Activated T-helper 2 cell treated with anti-CD3 and anti-CD28 coated beads, Interferon-gamma antibody, Interleukin-2, Interleukin-4, amounts not matched to agents 10 μg/mL and 5 μg/mL and 100 μg/mL, durations not matched to agents 14 hours and 24 hours and 36 hours (primary cell): ENCODE measurements at regions of chrX and their contacts with region 1.

Region 1: GRCh38 chrX:47623540-47624027 is 3.9 kb upstream of the SYN1 start:
- DNase-seq: peak; percentile 17
- H3K4me3 Mint-ChIP-seq: peak overlapping the region; percentile 71
- H3K27ac Mint-ChIP-seq: no peak overlapping the region
- H3K4me1 Mint-ChIP-seq: peaks cover 10% of the 10 kb centered on the region
- H3K27me3 Mint-ChIP-seq: peaks cover 14% of the 10 kb centered on the region

Region 2: DNA sequence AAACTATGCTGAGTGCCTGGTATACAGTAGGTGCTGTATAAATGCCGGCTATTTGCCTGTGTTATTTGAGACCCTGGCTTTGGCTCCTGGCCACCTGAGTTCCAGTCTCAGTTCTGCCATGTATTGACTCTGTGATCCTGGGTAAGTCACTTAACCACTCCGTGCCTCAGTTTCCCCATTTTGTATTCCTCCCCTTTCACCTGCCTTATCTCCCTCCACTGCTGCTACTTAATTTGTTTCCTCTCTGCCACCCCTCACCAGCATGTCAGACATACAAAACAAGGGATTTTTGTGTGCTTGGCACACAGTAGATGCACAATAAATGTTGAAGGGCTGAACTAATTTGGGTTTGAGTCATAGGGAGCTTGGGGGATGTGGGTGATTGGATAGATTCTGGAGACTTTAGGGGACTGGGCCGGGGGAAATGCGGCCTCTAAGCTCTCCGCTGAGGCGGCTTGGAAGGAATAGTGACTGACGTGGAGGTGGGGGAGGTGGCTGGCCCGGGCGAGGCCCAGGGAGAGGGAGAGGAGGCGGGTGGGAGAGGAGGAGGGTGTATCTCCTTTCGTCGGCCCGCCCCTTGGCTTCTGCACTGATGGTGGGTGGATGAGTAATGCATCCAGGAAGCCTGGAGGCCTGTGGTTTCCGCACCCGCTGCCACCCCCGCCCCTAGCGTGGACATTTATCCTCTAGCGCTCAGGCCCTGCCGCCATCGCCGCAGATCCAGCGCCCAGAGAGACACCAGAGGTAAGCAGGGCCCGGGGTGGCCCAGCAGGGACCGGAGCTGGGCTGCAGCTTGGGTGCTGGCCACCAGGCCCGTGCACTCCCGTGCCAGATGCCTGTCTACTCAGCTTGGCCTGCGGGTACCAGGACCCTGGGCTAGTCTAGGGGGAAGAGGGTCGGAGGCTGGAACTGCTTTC is 41.6 kb before region 1 on chrX and contains the start of gene TIMP1:
- intact Hi-C with region 1: loop called (anchors 2 kb)
- DNase-seq: peak; percentile 78
- H3K4me3 Mint-ChIP-seq: peak within 1 kb of the TSS; percentile 64
- H3K27ac Mint-ChIP-seq: peak within 1 kb of the TSS; percentile 56
- H3K4me1 Mint-ChIP-seq: peaks cover 34% of the 10 kb centered on the region
- H3K27me3 Mint-ChIP-seq: no peaks in the 10 kb centered on the region
- total RNA-seq, gene TIMP1: 76.5 and 77.1 TPM in 2 replicates

Region 3: GRCh38 chrX:47815901-47816845 is 192.6 kb after region 1 on chrX:
- intact Hi-C with region 1: no loop called
- DNase-seq: no peak
- H3K4me3 Mint-ChIP-seq: no peak overlapping the region
- H3K27ac Mint-ChIP-seq: no peak overlapping the region
- H3K4me1 Mint-ChIP-seq: peaks cover 4% of the 10 kb centered on the region
- H3K27me3 Mint-ChIP-seq: no peaks in the 10 kb centered on the region